GM18951 (cell line): ENCODE measurements at regions of chr3 and their contacts with region 1.

Region 1: GRCh38 chr3:152071924-152072323 is 196.8 kb upstream of the MBNL1 start:
- POLR2A ChIP-seq: no peak

Region 2: DNA sequence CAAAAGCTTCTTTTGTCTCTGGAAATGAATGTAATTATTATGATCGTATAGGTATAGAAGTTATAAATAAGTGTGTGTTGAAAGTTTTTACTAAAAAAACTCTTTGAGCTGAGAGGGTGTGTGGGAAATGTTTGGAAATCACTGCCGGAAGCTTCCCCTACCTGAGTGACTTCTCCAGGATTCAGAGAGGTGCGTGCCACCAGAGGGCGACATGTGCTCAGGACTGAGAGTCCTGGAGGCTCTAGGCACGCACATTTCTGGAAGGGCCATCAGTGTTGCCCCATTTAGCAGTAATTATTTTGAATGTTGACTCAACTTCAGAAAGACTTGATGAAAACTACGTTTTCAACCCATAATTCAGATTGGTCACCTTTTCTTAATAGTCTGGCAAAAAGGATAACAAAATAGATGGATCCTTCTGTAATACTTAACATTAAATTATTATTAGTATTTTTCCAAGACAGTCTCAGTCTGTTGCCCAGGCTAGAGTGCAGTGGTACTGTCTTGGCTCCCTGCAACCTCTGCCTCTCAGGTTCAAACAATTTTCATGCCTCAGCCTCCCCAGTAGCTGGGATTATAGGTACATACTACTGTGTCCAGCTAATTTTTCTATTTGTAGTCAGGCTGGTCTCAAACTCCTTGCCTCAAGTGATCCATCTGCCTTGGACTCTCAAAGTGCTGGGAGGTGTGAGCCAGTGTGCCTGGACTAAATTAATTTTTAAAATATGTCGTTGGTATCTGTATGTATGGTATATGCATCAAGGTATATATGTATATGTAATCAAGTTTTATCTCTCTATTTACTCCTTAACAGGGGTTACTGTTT is 903.4 kb before region 1 on chr3:
- in situ Hi-C with region 1: no loop called
- POLR2A ChIP-seq: no peak

Region 3: DNA sequence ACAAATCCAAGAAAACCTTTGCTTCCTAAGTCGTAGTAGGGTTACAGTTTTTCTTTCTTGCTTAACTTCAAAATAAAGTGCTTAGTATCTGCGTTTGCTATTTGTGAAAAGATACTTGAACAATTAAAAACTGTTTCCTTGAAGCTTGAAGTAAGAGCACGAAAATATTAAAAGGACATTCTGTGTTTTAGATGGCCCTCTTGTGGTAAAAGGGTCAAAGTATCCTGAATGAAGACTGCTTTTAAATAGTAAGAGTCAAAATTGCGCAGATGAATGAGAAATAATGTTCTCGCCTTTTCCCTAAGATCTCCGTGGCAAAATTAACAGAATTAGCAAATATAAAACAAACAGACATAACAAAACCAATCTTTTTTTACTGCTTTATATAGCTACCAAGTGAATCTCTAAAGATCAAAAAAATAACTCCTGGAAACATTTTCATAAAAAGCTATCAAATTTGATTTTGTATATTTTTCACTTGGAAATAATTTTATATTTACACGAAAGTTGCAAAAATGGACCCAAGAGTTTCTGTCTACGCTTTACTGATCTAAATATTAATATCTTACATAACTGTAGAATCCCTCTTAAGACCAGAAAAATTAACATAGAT is 372.2 kb after region 1 on chr3:
- in situ Hi-C with region 1: loop called (anchors 25 kb)
- POLR2A ChIP-seq: no peak